ENCODE measurements at regions of chr7 and their contacts with region 1.

Region 1: GRCh38 chr7:32204361-32205018 is 134.3 kb upstream of the PDE1C start:
- DNase-seq: peak; percentile 70 to 74
- H3K4me3 ChIP-seq: peak overlapping the region; percentile 21 to 35
- H3K27ac ChIP-seq: peak overlapping the region; percentile 66
- H3K4me1 ChIP-seq: no peaks in the 10 kb centered on the region
- H3K27me3 ChIP-seq: no peaks in the 10 kb centered on the region
- CTCF ChIP-seq: peak; percentile 68 to 88 (median 82)
- POLR2A ChIP-seq: no peak

Region 2: GRCh38 chr7:31744294-31744874 is 460.1 kb before region 1 on chr7:
- intact Hi-C with region 1: loop called (anchors 5 kb)
- DNase-seq: peak; percentile 52 to 58
- H3K4me3 ChIP-seq: no peak overlapping the region
- H3K27ac ChIP-seq: no peak overlapping the region
- H3K4me1 ChIP-seq: no peaks in the 10 kb centered on the region
- H3K27me3 ChIP-seq: no peaks in the 10 kb centered on the region
- CTCF ChIP-seq: peak; percentile 75 to 89 (median 78)
- POLR2A ChIP-seq: no peak

Measured in uterus (tissue), 4 donors.